ENCODE measurements at regions of chr7 and their contacts with region 1.

Region 1: GRCh38 chr7:108452722-108453121 is 3.5 kb downstream of the NRCAM start:
- DNase-seq: no peak
- ATAC-seq: peak; percentile 65
- H3K4me3 ChIP-seq: no peak overlapping the region
- H3K27ac ChIP-seq: no peak overlapping the region
- H3K4me1 ChIP-seq: no peaks in the 10 kb centered on the region
- H3K27me3 ChIP-seq: peaks cover 13 to 14% of the 10 kb centered on the region in 2 experiments
- CTCF ChIP-seq: peak; percentile 47 to 61 (median 57); a peak in 5 of 6 replicates
- EP300 ChIP-seq: no peak
- POLR2A ChIP-seq: no peak
- RAD21 ChIP-seq: peak; percentile 56

Region 2: DNA sequence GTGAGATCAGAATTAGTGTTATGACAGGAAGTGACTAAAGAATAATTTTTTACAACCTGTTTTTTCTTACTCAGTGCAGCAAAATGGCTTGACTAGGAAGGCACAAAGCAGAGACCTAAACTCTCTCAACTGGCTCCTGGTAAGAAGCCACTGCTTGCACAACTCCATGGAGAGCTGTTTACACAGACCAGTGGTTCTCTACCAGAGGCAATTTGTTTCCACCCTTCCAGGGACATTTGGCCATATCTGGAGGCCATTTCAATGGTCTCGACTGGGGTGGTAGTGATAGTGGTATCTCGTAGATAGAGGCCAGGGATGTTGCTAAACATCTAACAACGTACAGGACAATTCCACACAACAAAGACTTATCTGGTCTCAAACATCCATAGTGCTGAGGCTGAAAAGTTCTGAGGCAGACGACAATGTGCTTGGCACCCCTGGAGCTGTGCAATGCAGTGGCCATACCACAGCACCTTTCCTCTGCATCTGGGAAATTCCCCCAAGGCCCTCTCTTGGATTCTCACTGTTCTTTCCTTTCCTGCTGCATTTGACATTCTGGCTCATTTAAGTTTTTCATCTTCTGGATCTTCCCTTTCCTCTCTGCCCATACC is 217.2 kb before region 1 on chr7:
- CTCF ChIA-PET with region 1: no interaction called
- POLR2A ChIA-PET with region 1: no interaction called
- RAD21 ChIA-PET with region 1: no interaction called
- SMC1A ChIA-PET with region 1: no interaction called
- in situ Hi-C with region 1: no loop called
- intact Hi-C with region 1: no loop called
- DNase-seq: no peak
- ATAC-seq: peak; percentile 37
- H3K4me3 ChIP-seq: no peak overlapping the region
- H3K27ac ChIP-seq: no peak overlapping the region
- H3K4me1 ChIP-seq: no peaks in the 10 kb centered on the region
- H3K27me3 ChIP-seq: no peaks in the 10 kb centered on the region
- CTCF ChIP-seq: no peak
- EP300 ChIP-seq: no peak
- POLR2A ChIP-seq: no peak
- RAD21 ChIP-seq: no peak

Region 3: DNA sequence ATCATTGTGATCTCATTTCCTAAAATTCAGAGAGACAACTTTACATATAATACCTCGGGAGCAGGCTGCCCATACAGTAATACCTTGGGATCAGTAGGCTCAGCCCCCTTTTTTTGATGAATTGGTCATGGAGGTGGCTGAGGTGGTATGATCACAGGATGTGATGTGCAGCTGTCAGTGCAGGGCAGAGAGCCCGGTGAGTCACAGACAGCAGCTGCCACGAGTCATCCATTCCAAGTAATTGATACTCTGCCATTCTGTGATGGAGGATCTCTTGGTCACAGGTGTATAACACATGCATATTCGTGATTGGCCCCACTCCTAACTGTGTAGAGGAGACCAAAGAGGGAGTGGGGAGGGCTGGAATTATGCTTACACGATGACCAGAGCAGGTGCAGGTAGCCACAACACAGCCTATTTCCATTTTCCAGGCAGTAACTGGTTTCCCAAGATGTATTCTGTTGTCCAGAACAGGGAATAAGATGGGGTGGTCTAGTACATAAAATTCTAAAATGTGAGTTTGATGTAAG is 10.6 kb before region 1 on chr7:
- CTCF ChIA-PET with region 1: interaction called, 11 read pairs
- POLR2A ChIA-PET with region 1: no interaction called
- RAD21 ChIA-PET with region 1: no interaction called
- SMC1A ChIA-PET with region 1: interaction called, 12 read pairs
- in situ Hi-C with region 1: no loop called
- intact Hi-C with region 1: no loop called
- DNase-seq: no peak
- ATAC-seq: no peak; the same call in 2 of the 3 replicates
- H3K4me3 ChIP-seq: no peak overlapping the region
- H3K27ac ChIP-seq: no peak overlapping the region
- H3K4me1 ChIP-seq: no peaks in the 10 kb centered on the region
- H3K27me3 ChIP-seq: no peaks in the 10 kb centered on the region
- CTCF ChIP-seq: no peak
- EP300 ChIP-seq: no peak
- POLR2A ChIP-seq: no peak
- RAD21 ChIP-seq: no peak